ENCODE measurements at regions of chr3 and their contacts with region 1.

Region 1: DNA sequence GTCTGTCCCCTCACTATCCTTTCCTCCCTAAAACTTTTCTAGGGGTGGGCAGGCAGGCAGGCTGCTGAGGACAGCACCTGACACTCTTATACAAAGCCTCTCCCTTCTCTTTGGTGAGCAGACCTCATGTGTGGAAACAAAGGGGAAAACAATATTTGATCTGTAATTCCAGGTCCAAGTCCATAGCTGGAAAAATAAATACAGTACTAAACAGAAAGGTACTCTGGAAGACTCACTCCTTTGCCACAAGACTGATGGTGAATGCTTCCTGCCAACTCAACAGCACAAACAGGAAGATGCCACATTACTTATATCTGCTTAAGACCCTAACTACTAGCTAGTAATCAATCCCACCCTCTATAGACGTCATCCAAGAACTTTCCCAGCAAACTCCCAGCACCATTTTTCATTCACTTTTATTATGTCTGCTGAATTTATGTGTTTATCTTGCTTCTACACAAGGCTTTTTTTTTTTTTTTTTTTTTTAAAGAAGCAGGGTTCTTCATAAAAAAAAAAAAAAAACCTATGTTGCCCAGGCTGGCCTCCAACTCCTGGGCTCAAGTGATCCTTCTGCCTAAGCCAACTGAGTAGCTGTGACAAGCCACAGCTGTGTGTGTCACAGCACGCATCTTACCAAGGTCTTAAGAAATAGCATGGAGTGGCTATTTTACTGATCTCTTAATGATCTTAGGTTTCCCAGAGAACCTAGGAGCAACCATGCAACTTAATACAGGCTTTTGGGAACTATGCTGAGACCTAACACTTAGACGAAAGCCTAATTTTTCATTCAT is 44.2 kb upstream of the CSPG5 start:
- DNase-seq: no peak
- H3K4me3 Mint-ChIP-seq: no peak overlapping the region
- H3K27ac Mint-ChIP-seq: no peak overlapping the region
- H3K4me1 Mint-ChIP-seq: peaks cover 3% of the 10 kb centered on the region
- H3K27me3 Mint-ChIP-seq: no peaks in the 10 kb centered on the region

Region 2: GRCh38 chr3:47594792-47595191 is 28.1 kb before region 1 on chr3:
- intact Hi-C with region 1: no loop called
- DNase-seq: no peak
- H3K4me3 Mint-ChIP-seq: no peak overlapping the region
- H3K27ac Mint-ChIP-seq: no peak overlapping the region
- H3K4me1 Mint-ChIP-seq: no peaks in the 10 kb centered on the region
- H3K27me3 Mint-ChIP-seq: no peaks in the 10 kb centered on the region

Region 3: DNA sequence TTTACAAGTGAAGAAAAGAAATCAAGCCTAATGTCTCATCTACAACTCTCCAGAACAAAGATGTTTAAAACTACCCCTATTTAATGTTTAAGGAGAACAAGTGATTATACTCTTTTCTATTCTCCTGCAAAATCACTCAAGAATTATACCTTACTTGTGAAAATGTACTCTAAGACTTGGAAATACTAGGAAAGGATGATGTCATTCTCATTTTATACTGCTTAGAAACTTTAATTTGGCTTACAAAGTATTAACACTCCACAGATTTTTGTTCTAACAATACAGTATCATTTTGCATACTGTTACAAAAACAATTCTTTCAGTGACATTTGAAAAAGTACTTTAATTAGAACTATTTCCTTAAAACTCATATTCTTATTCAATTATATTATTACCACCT is 69.3 kb after region 1 on chr3:
- intact Hi-C with region 1: loop called (anchors 10 kb)
- DNase-seq: no peak
- H3K4me3 Mint-ChIP-seq: no peak overlapping the region
- H3K27ac Mint-ChIP-seq: no peak overlapping the region
- H3K4me1 Mint-ChIP-seq: no peaks in the 10 kb centered on the region
- H3K27me3 Mint-ChIP-seq: no peaks in the 10 kb centered on the region

Region 4: GRCh38 chr3:48023377-48023776 is 400.5 kb after region 1 on chr3:
- intact Hi-C with region 1: no loop called
- DNase-seq: no peak
- H3K4me3 Mint-ChIP-seq: no peak overlapping the region
- H3K27ac Mint-ChIP-seq: no peak overlapping the region
- H3K4me1 Mint-ChIP-seq: peaks cover 7% of the 10 kb centered on the region
- H3K27me3 Mint-ChIP-seq: no peaks in the 10 kb centered on the region